ENCODE measurements at regions of chr2 and their contacts with region 1.

Region 1: GRCh38 chr2:234544659-234545611 is 48.1 kb upstream of the ARL4C start:
- DNase-seq: peak; percentile 66 to 83
- H3K4me3 ChIP-seq: no peak overlapping the region
- H3K27ac ChIP-seq: no peak overlapping the region
- H3K4me1 ChIP-seq: peaks cover 4% of the 10 kb centered on the region; the same call in 1 of the 2 replicates
- H3K27me3 ChIP-seq: no peaks in the 10 kb centered on the region
- CTCF ChIP-seq: peak; percentile 98

Region 2: DNA sequence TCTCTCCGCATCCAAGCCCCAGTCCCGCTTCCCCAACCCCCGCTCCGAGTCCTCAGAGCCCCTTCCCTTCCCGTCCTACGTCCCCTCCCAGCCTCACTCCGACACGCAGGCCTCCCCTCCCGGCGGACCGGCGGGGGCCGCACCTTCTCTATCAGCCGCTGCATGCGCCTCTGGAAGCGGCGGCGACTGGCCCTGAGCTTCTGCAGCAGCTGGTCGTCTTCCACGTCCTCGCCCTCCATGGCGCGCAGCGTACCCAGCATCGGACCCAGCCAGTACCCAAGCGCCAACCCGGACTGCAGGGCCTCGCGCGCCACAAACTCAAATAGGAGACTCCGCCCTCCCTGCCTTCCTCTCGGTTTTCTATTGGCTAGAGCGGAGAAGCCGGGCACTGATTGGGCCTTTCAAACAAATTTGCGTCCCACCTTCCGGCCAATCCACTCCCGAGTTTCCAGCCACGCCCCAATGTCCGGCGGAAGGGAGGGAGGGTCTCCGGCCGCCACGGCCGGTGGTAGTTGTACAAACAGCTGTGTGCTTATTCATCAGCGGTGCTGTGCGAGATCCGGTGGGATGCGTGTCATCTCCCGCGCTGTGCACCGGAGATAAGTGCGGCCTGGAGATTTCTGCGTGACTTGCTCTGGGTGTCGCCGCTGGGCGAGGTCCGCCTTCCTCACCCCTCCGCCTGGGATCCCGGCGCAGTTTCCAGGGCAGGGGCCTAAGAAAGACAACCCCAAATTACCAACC is 690.5 kb before region 1 on chr2 and contains the start of gene HJURP:
- CTCF ChIA-PET with region 1: interaction called, 4 read pairs
- POLR2A ChIA-PET with region 1: no interaction called
- intact Hi-C with region 1: loop called (anchors 1 kb)
- DNase-seq: peak; percentile 95 to 98
- H3K4me3 ChIP-seq: peak within 1 kb of the TSS; percentile 100
- H3K27ac ChIP-seq: peak within 1 kb of the TSS; percentile 21; the same call in 1 of the 2 replicates
- H3K4me1 ChIP-seq: peaks cover 32% of the 10 kb centered on the region
- H3K27me3 ChIP-seq: no peaks in the 10 kb centered on the region
- CTCF ChIP-seq: no peak
- total RNA-seq, gene HJURP: 109 TPM in 2 replicates

Region 3: DNA sequence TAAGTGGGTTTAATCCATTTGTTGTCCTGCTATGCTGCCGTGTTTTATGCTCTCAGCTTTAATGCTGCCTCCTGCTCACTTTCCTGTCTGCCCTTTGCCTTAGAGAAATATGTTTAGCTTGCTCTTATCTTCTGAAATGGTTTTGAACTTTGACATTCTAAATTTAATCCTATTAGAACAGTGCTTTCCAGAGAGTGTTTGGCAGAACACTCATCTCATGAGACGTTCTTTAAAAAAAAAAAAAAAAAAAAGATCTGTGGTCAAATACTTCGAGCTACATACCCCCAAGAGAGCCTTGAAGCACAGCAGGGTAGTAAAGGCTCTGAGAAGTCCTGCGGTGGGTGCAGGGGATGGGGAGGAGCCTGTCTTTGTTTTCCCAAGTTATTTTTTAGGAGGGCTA is 333.1 kb before region 1 on chr2:
- CTCF ChIA-PET with region 1: no interaction called
- POLR2A ChIA-PET with region 1: no interaction called
- intact Hi-C with region 1: no loop called
- DNase-seq: no peak
- H3K4me3 ChIP-seq: no peak overlapping the region
- H3K27ac ChIP-seq: no peak overlapping the region
- H3K4me1 ChIP-seq: peaks cover 10% of the 10 kb centered on the region
- H3K27me3 ChIP-seq: no peaks in the 10 kb centered on the region
- CTCF ChIP-seq: no peak

Region 4: GRCh38 chr2:234257856-234258561 is 286.9 kb before region 1 on chr2:
- CTCF ChIA-PET with region 1: interaction called, 5 read pairs
- POLR2A ChIA-PET with region 1: no interaction called
- intact Hi-C with region 1: loop called (anchors 2 kb)
- DNase-seq: peak; percentile 92 to 98
- H3K4me3 ChIP-seq: peak overlapping the region; percentile 19; the same call in 1 of the 2 replicates
- H3K27ac ChIP-seq: peak overlapping the region; percentile 88
- H3K4me1 ChIP-seq: peaks cover 61% of the 10 kb centered on the region
- H3K27me3 ChIP-seq: no peaks in the 10 kb centered on the region
- CTCF ChIP-seq: peak; percentile 85

Region 5: DNA sequence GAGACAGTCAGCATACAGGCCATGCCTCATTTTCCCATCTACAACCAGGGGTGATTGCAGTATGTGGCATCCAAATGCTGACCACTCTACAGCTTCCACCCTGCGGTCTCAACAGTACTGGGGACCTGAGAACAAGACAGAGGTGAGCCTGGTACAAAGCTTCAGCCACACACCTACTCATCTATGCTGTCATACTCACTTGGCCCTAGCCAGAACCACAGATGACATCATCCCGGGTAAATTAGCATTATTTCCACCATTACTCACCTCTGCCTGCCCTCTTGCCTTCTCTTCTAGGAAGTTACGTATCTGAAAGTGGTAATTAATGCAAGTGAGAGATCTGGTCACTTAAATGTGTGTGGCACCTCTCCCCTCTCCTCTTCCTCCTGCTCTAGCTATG is 160.2 kb after region 1 on chr2:
- CTCF ChIA-PET with region 1: no interaction called
- POLR2A ChIA-PET with region 1: no interaction called
- intact Hi-C with region 1: no loop called
- DNase-seq: no peak
- H3K4me3 ChIP-seq: no peak overlapping the region
- H3K27ac ChIP-seq: no peak overlapping the region
- H3K4me1 ChIP-seq: peaks cover 14% of the 10 kb centered on the region
- H3K27me3 ChIP-seq: no peaks in the 10 kb centered on the region
- CTCF ChIP-seq: no peak

Region 6: GRCh38 chr2:235116885-235117492 is 572.1 kb after region 1 on chr2:
- CTCF ChIA-PET with region 1: interaction called, 12 read pairs
- POLR2A ChIA-PET with region 1: no interaction called
- intact Hi-C with region 1: loop called (anchors 1 kb)
- DNase-seq: peak in 1 of 2 experiments; percentile 55
- H3K4me3 ChIP-seq: no peak overlapping the region
- H3K27ac ChIP-seq: no peak overlapping the region
- H3K4me1 ChIP-seq: no peaks in the 10 kb centered on the region; the same call in 1 of the 2 replicates
- H3K27me3 ChIP-seq: no peaks in the 10 kb centered on the region
- CTCF ChIP-seq: peak; percentile 92

Region 7: DNA sequence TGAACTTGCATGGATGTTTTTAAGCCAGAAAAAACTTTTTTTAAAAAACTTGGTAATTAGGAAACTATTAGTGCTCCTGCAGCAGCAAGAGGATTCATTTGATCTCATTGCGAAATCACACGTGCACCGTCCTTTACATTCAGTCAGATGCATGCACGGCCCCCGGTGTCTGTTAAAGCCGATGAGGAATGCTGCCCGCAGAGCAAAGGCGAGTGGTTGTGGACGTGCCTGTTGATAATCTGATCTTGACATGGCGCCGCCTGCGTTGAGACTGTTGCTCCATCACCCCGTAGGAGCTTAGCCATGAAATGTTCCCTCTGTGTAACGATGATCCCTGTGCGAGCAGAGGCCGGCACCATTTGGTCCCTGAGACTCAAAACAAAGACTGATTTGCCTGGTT is 1323.3 kb after region 1 on chr2:
- CTCF ChIA-PET with region 1: no interaction called
- POLR2A ChIA-PET with region 1: interaction called, 10 read pairs
- intact Hi-C with region 1: no loop called
- DNase-seq: no peak
- H3K4me3 ChIP-seq: no peak overlapping the region
- H3K27ac ChIP-seq: no peak overlapping the region
- H3K4me1 ChIP-seq: no peaks in the 10 kb centered on the region
- H3K27me3 ChIP-seq: no peaks in the 10 kb centered on the region
- CTCF ChIP-seq: no peak

Measured in PC-9 (cell line).